Activated CD8-positive, alpha-beta memory T cell treated with anti-CD3 and anti-CD28 coated beads, Interleukin-2, amount 10 ng/mL, durations not matched to agents 7 days and 5 days (primary cell): ENCODE measurements at regions of chr11 and their contacts with region 1.

Region 1: DNA sequence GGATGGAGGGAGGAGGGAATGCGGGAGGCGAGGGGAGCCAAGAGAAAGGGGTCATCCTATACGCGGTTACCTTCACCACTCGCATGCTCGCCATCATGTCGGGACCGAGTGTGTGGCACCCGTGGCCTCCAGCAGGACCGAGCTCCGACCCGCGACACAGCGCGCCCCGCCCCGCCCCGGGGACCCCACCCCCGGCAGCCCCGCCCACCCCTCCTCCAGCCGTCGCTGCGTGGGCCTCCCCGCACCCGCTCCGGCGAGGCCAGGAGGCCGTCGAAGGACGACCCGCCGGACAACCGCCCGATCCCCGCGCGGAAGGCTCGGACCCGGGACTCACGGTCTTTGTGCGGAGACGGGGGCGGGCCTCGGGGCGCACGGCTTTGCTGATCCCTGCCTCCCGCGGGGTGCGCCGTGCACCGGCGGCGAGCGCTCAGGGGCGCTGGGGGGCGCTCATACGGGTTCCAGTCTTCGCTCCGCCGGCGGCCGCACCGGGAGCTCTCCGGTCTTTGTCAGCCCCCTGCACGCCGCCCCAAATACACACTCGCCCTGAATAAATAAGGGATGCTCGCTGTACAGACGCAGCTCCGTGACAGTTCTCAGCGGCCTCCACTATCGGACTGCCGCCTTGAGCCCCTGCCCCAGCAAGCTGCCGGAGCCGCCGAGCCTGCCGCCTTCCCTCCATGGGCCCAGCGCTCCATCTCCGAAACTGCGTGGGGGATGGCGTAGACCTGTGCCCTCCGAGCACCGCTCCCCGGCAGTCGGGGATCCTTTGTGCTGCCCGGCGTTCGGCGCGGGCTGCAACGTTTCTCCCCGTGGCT is at the start of gene UBE2L6:
- DNase-seq: peak; percentile 77
- ATAC-seq: peak; percentile 79
- H3K4me3 Mint-ChIP-seq: peak within 1 kb of the TSS; percentile 100
- H3K27ac Mint-ChIP-seq: peak within 1 kb of the TSS; percentile 98
- H3K4me1 Mint-ChIP-seq: peaks cover 30% of the 10 kb centered on the region
- H3K27me3 Mint-ChIP-seq: no peaks in the 10 kb centered on the region
- total RNA-seq, gene UBE2L6: 245 to 317 TPM

Region 2: GRCh38 chr11:57649826-57650738 is 82.4 kb after region 1 on chr11 and contains the start of gene YPEL4:
- CTCF ChIA-PET with region 1: interaction called, 267 read pairs
- DNase-seq: peak; percentile 80
- ATAC-seq: peak; percentile 82
- H3K4me3 Mint-ChIP-seq: peak within 1 kb of the TSS; percentile 68
- H3K27ac Mint-ChIP-seq: peak within 1 kb of the TSS; percentile 44
- H3K4me1 Mint-ChIP-seq: peaks cover 55% of the 10 kb centered on the region
- H3K27me3 Mint-ChIP-seq: peaks cover 43% of the 10 kb centered on the region
- total RNA-seq, gene YPEL4: 0.42 to 1.0 TPM

Region 3: DNA sequence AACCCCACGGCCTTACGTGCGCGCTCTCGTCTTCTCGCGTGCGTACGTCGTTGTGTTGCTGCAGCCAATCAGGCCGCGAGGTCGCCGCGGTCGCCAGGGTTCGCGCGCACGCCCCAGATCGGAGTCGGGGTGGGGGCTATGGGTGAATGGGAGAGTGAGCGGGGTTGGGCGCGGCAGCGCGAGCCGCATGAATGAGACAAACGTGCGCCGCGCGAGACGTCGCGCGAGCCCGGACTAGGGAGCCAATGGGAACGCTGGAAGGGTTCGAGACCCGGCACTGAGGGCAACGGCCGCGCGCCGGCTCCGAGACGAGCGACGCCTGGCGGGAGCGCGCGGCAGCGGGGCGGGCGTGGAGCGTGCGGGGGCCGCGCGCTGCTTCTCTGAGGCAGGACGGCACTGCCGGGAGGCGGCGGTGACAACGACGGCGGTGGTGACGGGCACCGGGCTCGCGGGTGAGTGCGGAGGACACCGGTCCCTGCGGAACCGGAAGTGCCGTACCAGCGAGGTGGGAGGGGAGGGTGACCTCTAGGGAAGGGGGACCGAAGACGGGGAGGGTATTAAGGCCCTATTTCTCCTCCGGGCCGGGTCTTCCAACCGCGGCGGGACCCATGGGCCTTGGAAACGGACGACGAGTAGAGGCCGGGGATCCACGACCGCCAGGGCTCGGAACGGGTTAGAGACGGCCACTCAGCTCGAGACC is 100.2 kb after region 1 on chr11 and contains the start of gene ZDHHC5:
- CTCF ChIA-PET with region 1: interaction called, 12 read pairs
- DNase-seq: peak; percentile 100
- ATAC-seq: peak; percentile 89
- H3K4me3 Mint-ChIP-seq: peak within 1 kb of the TSS; percentile 95
- H3K27ac Mint-ChIP-seq: peak within 1 kb of the TSS; percentile 97
- H3K4me1 Mint-ChIP-seq: peaks cover 47% of the 10 kb centered on the region
- H3K27me3 Mint-ChIP-seq: no peaks in the 10 kb centered on the region
- total RNA-seq, gene ZDHHC5: 74.5 to 75.9 TPM

Region 4: GRCh38 chr11:57761301-57762234 is 193.8 kb after region 1 on chr11 and contains the start of gene CTNND1:
- CTCF ChIA-PET with region 1: no interaction called
- DNase-seq: no peak
- ATAC-seq: no peak
- H3K4me3 Mint-ChIP-seq: no peak within 1 kb of the TSS
- H3K27ac Mint-ChIP-seq: no peak within 1 kb of the TSS
- H3K4me1 Mint-ChIP-seq: peaks cover 2% of the 10 kb centered on the region
- H3K27me3 Mint-ChIP-seq: peaks cover 3% of the 10 kb centered on the region
- total RNA-seq, gene CTNND1: 5.0 to 7.7 TPM